ENCODE measurements at regions of chr7 and their contacts with region 1.

Region 1: DNA sequence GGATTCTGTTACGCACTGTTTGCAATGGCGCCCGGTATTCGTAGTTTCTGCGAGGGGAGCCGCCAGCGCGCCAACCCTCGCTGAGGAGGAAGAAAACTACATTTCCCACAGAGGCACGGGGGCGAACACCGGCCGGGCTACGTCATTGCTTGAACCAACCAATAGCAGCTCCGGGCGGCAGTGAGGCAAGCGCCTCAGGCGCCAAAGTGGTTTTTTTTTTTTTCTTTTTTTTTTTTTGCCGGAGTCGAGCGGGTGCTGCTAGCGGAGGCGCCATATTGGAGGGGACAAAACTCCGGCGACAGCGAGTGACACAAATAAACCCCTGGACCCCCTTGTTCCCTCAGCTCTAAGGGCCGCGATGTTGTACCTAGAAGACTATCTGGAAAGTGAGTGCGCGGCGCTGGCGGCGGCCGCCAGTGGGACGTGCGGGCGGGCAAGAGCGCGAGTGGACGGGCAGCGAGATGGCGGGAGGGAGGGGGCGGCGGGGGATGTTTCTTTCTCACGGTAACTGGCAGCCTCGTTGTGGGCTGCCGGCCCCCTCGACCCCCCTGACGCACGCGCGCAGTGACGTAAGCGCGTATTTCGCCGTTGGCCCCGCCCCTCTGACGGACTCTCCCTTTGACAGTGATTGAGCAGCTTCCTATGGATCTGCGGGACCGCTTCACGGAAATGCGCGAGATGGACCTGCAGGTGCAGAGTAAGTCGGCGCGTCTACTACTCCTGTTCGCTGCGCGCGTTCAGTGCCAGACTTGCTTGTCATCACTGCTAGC is at the start of gene ING3:
- DNase-seq: peak; percentile 97
- H3K4me3 Mint-ChIP-seq: peak within 1 kb of the TSS; percentile 87
- H3K27ac Mint-ChIP-seq: peak within 1 kb of the TSS; percentile 92
- H3K4me1 Mint-ChIP-seq: peaks cover 34% of the 10 kb centered on the region
- H3K27me3 Mint-ChIP-seq: peaks cover 10% of the 10 kb centered on the region
- total RNA-seq, gene ING3: 26.7 and 28.6 TPM in 2 replicates

Region 2: DNA sequence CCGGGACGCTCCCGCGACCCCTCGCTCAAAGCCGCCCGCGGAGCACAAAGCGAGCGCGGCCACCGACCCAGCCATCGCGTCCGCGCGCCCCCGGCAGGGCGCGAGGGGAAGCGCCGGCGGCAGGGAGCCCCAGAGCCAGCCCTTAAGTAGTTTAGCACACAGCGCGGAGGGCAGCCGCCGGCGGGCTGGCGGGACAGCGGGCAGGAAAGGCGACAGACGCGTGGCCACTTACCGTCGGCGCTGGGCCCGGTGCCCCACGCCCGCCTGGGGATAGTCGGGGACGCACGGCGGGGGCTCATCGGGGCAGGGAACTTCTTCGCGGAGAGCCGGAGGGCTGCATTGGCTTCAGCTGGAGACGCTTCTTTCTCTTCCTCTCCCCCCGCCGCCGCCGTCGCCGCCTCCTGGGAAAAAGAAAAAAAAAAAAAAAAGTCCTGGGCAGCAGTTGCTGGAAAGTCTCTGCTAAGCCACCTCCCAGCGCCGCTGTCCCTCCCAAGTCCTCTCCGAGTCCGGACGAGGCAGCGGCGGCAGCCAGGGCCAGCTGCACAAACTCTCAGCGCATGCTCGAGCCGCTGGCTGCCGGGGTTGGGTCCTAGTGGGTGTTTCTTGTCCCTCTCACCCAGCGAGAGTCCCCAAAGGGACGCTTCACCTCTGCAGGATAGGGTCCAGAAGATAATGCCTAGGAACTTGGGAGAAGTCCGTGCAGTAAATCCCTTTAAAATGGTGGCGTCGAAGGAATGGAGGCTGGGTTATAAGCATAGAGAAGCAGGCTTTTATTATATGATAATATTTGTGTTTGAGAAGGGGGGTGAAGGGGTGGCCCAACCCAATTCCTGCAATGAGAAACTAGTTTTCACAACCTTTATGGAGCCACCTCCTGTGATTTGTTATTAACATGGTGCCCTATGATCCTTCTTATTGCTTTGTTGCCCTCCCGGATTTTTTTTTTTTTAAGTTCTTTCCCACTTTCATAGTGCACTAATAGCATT is 92.8 kb before region 1 on chr7 and contains the start of gene TSPAN12:
- intact Hi-C with region 1: loop called (anchors 5 kb)
- DNase-seq: peak; percentile 40
- H3K4me3 Mint-ChIP-seq: peak within 1 kb of the TSS; percentile 73
- H3K27ac Mint-ChIP-seq: no peak within 1 kb of the TSS
- H3K4me1 Mint-ChIP-seq: peaks cover 12% of the 10 kb centered on the region
- H3K27me3 Mint-ChIP-seq: peaks cover 67% of the 10 kb centered on the region
- total RNA-seq, gene TSPAN12: not detected in 2 replicates

Region 3: GRCh38 chr7:120933475-120933874 is 17.2 kb before region 1 on chr7:
- intact Hi-C with region 1: no loop called
- DNase-seq: no peak
- H3K4me3 Mint-ChIP-seq: no peak overlapping the region
- H3K27ac Mint-ChIP-seq: no peak overlapping the region
- H3K4me1 Mint-ChIP-seq: peaks cover 6% of the 10 kb centered on the region
- H3K27me3 Mint-ChIP-seq: peaks cover 8% of the 10 kb centered on the region

Region 4: GRCh38 chr7:121278120-121279021 is 327.6 kb after region 1 on chr7:
- intact Hi-C with region 1: loop called (anchors 2 kb)
- DNase-seq: no peak
- H3K4me3 Mint-ChIP-seq: no peak overlapping the region
- H3K27ac Mint-ChIP-seq: no peak overlapping the region
- H3K4me1 Mint-ChIP-seq: peaks cover 18% of the 10 kb centered on the region
- H3K27me3 Mint-ChIP-seq: peaks cover 8% of the 10 kb centered on the region

Region 5: DNA sequence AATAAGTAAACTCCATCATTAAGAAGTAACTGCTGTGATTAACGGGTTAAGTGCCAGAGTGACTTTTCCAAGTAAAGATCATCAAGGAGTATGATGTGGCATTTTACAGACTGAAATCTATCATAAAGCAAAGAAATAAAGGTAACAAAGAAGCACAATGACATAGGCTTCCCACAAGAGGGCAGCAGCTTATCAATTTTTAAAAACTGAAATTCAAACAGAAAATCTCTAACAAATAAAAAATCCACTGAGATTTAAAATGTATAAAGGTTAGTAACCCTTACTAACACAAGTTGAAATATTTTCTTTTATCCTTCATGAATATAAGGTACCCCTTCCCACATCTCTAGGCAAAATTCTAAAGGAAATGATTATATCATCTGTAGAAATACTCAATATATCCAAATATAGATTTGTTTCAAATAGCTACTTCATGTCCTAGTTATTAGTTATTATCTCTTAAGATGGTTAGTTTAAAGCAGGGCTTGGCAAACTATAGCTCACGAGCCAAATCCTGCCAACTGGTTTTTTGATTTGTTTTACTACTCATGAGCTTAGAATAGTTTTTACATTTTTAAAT is 416.2 kb after region 1 on chr7:
- intact Hi-C with region 1: loop called (anchors 10 kb)
- DNase-seq: no peak
- H3K4me3 Mint-ChIP-seq: peak overlapping the region; percentile 62
- H3K27ac Mint-ChIP-seq: no peak overlapping the region
- H3K4me1 Mint-ChIP-seq: peaks cover 53% of the 10 kb centered on the region
- H3K27me3 Mint-ChIP-seq: no peaks in the 10 kb centered on the region